ENCODE measurements at regions of chr3 and their contacts with region 1.

Region 1: DNA sequence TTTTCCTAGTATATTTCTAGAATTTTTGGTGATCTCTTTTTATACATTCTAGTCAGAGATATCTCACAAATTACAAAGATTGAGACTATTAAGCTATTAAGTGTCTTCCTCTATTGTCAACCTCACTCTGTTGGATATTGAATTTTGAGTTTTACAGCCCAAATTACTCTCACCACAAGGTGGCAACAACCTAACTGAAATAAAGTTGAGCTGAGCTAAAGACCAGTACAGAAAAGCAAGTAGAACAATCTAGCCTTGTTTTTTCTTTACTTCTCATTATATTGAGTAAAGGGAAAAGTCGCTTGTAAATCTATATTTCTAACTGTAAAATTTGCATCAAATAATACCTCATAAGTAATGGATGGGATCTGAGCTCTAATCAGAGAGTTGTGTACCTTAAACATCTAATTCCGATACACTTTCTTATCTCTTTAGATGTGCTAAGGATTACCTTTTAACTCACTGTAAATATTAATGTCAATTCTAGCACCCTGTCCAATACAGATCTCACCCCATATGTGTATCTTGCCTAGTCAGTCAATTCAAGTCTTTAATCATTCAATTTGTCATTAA is 13.6 kb upstream of the COMMD2 start:
- DNase-seq: no peak
- ATAC-seq: no peak
- H3K4me3 Mint-ChIP-seq: no peak overlapping the region
- H3K27ac Mint-ChIP-seq: no peak overlapping the region
- H3K4me1 Mint-ChIP-seq: no peaks in the 10 kb centered on the region
- H3K27me3 Mint-ChIP-seq: peaks cover 18% of the 10 kb centered on the region

Region 2: GRCh38 chr3:149688112-149688757 is 77.6 kb before region 1 on chr3:
- CTCF ChIA-PET with region 1: no interaction called
- POLR2A ChIA-PET with region 1: no interaction called
- DNase-seq: no peak
- ATAC-seq: no peak
- H3K4me3 Mint-ChIP-seq: no peak overlapping the region
- H3K27ac Mint-ChIP-seq: no peak overlapping the region
- H3K4me1 Mint-ChIP-seq: no peaks in the 10 kb centered on the region
- H3K27me3 Mint-ChIP-seq: peaks cover 6% of the 10 kb centered on the region

Region 3: DNA sequence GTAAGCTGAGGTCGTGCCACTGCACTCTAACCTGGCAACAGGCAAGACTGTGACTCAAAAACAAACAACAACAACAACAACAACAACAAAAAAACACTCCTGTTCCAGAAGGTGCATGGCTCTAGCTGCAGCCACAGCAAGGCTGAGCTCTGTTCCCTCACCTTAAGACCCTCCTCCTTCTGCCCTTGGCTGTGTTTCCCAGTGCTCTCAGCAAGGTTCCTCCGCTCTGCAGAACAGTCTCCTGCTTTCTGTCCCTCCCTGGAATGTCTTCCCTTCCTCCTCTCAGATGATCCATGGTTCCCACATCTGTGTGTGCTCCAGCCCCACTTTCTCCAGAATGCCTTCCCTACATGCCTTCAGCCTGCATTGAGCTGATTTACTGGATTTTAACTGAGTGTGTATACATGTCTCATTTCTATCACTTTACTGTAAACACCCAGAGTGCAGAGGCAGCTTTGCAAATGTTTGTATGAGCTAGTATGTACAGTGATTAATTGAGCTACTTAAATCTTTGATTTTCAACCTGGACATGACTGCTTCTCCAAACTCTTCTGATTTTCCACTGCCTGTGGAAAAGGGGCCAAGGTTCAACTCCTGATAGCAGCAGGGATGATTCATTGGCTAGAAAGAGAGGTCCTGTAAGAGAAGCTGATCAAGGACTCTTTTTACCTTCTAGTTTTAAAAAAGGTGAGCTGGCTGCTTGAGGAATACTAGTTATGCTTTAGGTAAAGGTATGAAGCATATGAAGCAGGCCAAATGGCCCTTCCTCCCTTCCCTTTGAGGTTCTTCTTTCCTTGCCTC is 11.8 kb after region 1 on chr3:
- CTCF ChIA-PET with region 1: interaction called, 14 read pairs
- POLR2A ChIA-PET with region 1: no interaction called
- DNase-seq: no peak
- ATAC-seq: no peak
- H3K4me3 Mint-ChIP-seq: no peak overlapping the region
- H3K27ac Mint-ChIP-seq: no peak overlapping the region
- H3K4me1 Mint-ChIP-seq: peaks cover 3% of the 10 kb centered on the region
- H3K27me3 Mint-ChIP-seq: peaks cover 15% of the 10 kb centered on the region

Region 4: DNA sequence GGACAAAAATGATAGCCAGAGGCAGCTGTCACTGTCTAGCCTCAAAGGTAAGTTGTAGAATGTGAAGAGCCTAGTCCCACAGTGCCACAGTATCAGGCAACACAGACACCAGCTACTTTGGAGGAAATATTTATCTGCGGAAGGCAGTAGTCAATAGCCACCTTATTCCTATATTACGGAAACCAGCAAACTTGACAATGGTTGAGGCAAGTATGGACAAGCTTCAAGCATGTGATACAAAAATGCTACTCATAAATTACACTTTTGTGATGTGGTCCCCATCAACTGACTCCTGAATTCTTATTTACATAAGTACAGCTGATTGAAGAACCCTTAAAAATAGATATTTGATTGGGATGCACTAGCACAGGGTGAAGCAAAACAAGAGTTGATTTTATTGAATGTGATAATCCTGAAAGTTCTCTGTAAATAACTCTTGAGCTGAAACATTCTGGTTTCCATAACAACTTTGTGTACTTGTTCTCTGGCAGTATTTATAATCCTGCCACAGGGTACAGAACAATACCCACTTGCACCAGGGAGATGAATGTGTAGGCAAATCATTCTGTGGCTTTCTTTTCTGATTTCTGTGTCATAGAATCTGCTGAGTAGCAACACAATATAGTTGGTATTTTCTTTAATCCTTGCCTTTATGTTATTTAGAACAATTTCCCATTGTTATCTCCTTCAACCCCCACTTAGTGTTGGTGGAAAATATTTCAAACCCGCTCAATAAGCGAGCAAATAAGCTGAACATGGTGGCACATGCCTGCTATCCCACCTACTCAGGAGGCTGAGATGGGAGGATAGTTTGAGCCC is 26.8 kb after region 1 on chr3 and contains the start of gene ANKUB1:
- CTCF ChIA-PET with region 1: no interaction called
- POLR2A ChIA-PET with region 1: no interaction called
- DNase-seq: no peak
- ATAC-seq: no peak
- H3K4me3 Mint-ChIP-seq: no peak within 1 kb of the TSS
- H3K27ac Mint-ChIP-seq: no peak within 1 kb of the TSS
- H3K4me1 Mint-ChIP-seq: no peaks in the 10 kb centered on the region
- H3K27me3 Mint-ChIP-seq: peaks cover 11% of the 10 kb centered on the region
- total RNA-seq, gene ANKUB1: not detected